Sigmoid colon (tissue), 7 donors: ENCODE measurements at regions of chr19 and their contacts with region 1.

Region 1: DNA sequence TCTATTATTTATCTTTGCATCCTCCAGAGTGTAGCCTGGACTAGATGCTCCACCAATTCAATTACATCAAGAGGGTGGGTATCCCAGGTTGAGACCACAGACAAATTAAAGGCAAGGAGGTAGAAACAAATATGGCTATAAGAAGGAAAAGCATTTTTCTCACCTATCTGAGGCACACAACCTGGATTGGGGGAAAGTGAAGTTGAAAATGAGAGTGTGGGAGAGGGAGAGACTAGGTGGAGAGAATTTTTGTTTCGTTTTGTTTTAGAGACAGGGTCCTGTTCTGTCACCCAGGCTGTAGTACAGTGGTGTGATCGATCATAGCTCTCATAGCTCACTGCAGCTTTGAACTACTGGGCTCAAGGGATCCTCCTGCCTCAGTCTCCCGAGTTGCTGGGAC is 5.8 kb upstream of the PRODH2 start:
- DNase-seq: no peak
- H3K4me3 ChIP-seq: no peak overlapping the region
- H3K27ac ChIP-seq: no peak overlapping the region
- H3K4me1 ChIP-seq: no peaks in the 10 kb centered on the region
- H3K27me3 ChIP-seq: peaks cover 0 to 34% (median 5%) of the 10 kb centered on the region in 3 donors
- CTCF ChIP-seq: no peak
- EP300 ChIP-seq: no peak
- POLR2A ChIP-seq: no peak

Region 2: GRCh38 chr19:35693830-35694599 is 124.4 kb before region 1 on chr19:
- intact Hi-C with region 1: loop called (anchors 2 kb)
- DNase-seq: peak; percentile 93
- H3K4me3 ChIP-seq: no peak overlapping the region
- H3K27ac ChIP-seq: no peak overlapping the region
- H3K4me1 ChIP-seq: no peaks in the 10 kb centered on the region
- H3K27me3 ChIP-seq: no peaks in the 10 kb centered on the region
- CTCF ChIP-seq: peak; percentile 96 to 99 (median 97)
- EP300 ChIP-seq: no peak
- POLR2A ChIP-seq: no peak

Region 3: GRCh38 chr19:35740423-35741202 is 77.8 kb before region 1 on chr19:
- intact Hi-C with region 1: no loop called
- DNase-seq: peak; percentile 99
- H3K4me3 ChIP-seq: peak overlapping the region; percentile 38 to 69 (median 51)
- H3K27ac ChIP-seq: peak overlapping the region; percentile 84 to 91 (median 87)
- H3K4me1 ChIP-seq: peaks cover 0 to 38% (median 30%) of the 10 kb centered on the region in 4 donors
- H3K27me3 ChIP-seq: no peaks in the 10 kb centered on the region
- CTCF ChIP-seq: peak in 2 of 4 experiments; percentile 17 to 26
- EP300 ChIP-seq: peak in 1 of 4 donors; percentile 76
- POLR2A ChIP-seq: no peak